ENCODE measurements at regions of chr5 and their contacts with region 1.

Region 1: DNA sequence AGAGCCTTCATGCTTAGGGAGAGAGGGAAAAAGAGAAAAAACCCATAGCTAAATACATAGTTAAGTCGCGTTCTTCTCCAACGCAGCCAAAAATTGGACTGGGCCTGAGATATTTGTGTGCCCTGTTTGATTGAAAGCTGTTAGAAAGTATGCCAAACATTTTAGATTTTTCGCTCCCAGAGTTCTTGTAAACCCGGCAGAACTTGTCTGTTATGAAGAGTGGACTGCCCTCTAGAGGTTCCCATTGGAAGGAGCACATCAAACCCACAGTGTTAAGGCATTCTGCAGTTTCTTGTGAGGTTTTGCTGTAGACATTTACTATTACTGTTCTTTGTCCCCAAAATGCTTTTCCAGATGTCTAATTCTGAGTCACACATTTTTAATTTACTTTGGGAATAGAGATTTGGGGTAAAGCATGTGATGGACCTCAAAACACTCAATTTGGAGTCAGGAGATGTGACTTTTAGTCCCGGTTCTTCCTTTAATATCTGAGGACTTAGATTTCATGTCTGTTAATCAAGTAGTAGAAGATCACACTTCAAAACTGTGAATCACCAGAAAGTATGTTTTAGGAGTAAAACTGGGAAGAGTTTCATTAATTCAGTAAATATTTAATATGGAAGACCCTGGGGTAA is 96.6 kb downstream of the PCSK1 start:
- DNase-seq: peak; percentile 35
- CTCF ChIP-seq: peak; percentile 84

Region 2: DNA sequence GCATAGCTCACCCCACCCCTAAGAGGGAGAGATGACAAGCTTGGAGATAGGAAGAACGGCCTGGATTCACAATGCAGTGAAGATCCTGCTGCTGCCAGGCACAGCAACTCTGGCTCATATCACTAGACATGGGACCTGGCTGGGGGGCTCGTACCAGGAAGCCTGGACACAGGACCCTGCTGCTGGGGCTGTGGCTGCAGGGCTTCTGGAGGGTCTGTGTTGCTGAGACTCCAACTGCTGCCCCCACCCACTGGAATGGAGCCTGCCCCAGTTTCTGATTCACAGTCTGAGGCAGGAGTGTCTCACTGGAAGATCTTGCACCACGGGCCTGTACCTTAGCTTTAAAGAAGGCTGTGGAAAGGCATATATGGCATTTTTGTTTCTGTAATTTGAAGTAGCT is 483.0 kb before region 1 on chr5:
- CTCF ChIA-PET with region 1: interaction called, 119 read pairs
- POLR2A ChIA-PET with region 1: no interaction called
- DNase-seq: no peak
- CTCF ChIP-seq: no peak

Region 3: DNA sequence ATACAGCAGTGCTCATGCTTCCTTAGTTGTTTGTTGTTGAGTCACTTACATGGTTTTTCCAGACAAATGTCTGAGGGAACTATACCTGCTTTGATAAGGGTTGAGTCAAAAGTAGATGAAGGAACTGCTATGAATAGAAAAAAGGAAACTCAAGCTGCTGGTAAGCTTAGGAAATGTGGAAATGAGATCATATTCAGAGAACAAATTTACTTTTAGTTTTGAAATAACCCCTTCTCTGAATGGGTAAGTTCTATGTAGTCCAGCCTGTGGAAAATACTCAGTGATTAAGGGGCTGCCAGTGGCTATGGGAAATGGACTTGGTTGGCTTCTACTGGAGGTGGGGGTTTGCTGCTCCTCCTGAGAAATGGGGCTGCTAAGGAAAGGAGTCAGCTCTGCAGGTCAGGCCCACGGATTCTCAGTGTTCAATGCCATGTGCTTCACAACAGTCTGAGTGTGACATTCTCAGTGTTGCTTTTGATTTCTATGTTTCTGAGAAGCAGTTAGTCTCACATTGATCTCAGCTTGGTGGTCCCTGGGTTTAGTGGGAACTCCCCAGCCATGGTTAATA is 466.3 kb before region 1 on chr5:
- CTCF ChIA-PET with region 1: interaction called, 119 read pairs
- POLR2A ChIA-PET with region 1: no interaction called
- DNase-seq: peak; percentile 45
- CTCF ChIP-seq: no peak

Region 4: DNA sequence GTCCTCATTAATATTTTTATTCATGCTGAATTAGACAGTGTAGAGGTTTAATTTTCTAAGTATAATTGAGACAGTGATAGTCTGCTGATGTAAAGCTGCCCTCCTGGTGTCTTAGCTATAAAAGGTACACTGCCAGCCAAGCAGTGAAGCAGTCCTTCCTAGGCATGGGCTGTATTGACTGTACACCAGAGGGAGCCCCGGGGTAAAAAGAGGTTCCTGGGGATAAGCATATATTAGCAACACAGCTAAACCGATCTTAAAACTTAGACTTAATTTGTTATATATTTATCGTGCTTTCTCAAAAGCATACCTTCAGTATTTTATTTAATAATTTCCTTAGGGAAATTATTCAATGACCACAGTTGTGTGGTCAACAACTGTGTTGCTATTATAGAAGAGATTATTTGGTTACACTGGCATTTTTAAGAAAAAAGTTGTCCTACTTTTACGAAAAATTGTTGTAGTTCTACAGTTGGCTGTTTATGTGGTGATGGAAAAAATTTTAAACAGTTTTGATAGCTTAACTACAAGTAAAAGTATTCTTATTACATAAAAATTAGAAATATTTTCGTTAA is 443.6 kb before region 1 on chr5:
- CTCF ChIA-PET with region 1: interaction called, 13 read pairs
- POLR2A ChIA-PET with region 1: no interaction called
- DNase-seq: peak; percentile 39
- CTCF ChIP-seq: peak; percentile 52

Region 5: DNA sequence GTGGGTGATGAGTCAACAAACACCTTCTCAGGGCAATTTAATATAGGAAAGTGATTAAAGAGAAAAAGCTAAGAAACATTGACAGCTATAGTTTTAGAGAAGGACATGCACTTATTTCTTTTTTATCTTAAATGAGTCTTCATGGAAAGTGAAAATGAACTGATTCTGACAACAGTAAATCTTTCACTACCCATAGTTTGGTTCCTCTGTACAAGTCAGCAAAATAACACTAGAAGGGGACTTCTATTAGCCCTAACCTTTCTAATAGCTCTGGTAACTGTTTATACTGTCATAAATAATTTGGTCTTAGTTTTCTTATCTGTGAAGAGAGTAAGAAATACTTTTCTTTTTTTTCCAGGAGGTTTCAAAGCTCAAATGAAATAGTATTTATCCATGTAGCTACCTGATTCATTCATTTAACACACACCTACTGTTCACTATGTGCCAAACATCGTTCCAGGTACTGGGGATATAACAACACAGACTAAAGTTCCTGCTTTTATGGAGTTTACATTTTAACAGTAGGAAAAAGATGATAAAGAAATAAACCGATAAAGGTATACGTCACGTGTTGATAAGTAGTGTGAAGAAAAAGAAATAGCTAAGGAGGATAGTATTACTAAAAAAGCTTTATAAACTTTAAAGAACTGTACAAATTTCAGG is 51.6 kb before region 1 on chr5:
- CTCF ChIA-PET with region 1: interaction called, 11 read pairs
- POLR2A ChIA-PET with region 1: no interaction called
- DNase-seq: no peak
- CTCF ChIP-seq: no peak

Region 6: GRCh38 chr5:96324708-96325107 is 11.8 kb before region 1 on chr5:
- CTCF ChIA-PET with region 1: interaction called, 39 read pairs
- POLR2A ChIA-PET with region 1: no interaction called
- DNase-seq: no peak
- CTCF ChIP-seq: no peak